ENCODE measurements at regions of chr1 and their contacts with region 1.

Region 1: GRCh38 chr1:194338241-194338948 is 1152.0 kb upstream of the B3GALT2 start:
- DNase-seq: no peak
- ATAC-seq: no peak
- H3K4me3 ChIP-seq: no peak overlapping the region
- H3K27ac ChIP-seq: no peak overlapping the region
- H3K4me1 ChIP-seq: no peaks in the 10 kb centered on the region
- H3K27me3 ChIP-seq: no peaks in the 10 kb centered on the region
- CTCF ChIP-seq: no peak
- POLR2A ChIP-seq: no peak

Region 2: DNA sequence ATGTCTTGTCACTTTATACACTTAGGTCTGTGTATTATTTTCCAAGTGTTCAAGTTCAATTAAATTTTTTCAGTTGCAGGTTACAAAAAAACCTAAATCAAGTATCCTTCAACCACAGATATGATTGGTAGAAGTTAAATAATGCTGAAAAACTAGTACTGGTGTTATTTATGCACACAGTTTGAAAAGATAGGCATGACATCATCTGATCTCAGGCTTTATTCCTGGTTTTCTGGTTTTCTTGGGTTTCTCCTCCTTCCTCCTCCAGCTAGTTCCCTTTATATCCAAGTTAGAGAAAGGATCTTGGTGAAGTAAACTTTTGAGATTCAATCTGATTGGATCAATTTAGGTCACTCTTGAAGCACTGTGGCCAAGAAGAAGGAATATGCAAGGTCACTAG is 49.1 kb after region 1 on chr1:
- intact Hi-C with region 1: loop called in 1 of 10 experiments (anchors 5 kb)
- DNase-seq: no peak
- ATAC-seq: no peak
- H3K4me3 ChIP-seq: no peak overlapping the region
- H3K27ac ChIP-seq: no peak overlapping the region
- H3K4me1 ChIP-seq: no peaks in the 10 kb centered on the region
- H3K27me3 ChIP-seq: no peaks in the 10 kb centered on the region
- CTCF ChIP-seq: no peak
- POLR2A ChIP-seq: no peak

Measured in heart left ventricle (tissue), 16 donors.